ENCODE measurements at regions of chr17 and their contacts with region 1.

Region 1: DNA sequence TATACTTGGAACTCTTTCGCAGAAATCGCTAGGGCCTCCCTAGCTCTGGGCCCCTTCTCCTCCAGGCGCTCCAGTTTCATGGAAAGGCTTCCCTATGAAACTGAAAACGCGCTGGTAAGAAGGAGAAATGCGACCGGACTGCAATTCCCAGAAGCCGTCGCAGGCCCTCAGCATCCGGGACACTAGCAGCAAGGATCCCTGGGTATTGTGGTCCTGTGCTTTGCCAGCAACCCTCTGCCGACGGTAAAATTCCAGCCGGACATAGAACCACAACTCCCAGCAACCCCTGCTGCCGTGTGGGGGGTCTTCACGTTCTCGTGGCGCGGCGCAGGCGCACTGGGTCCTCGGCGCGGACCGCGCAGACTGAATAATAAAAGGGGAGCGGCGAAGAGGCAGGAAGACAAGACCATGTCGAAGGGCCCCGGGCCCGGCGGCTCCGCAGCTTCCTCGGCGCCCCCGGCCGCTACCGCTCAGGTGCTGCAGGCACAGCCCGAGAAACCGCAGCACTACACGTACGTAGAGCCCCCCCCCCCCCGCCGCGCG is at the start of gene UNK:
- DNase-seq: peak; percentile 98 to 99
- ATAC-seq: peak; percentile 82 to 85
- H3K4me3 ChIP-seq: peak within 1 kb of the TSS; percentile 74 to 87 (median 86)
- H3K27ac ChIP-seq: peak within 1 kb of the TSS; percentile 98 to 100 (median 100)
- H3K4me1 ChIP-seq: peaks cover 41 to 47% of the 10 kb centered on the region in 2 donors
- H3K27me3 ChIP-seq: no peaks in the 10 kb centered on the region
- CTCF ChIP-seq: peak in 2 of 5 experiments; percentile 15 to 43
- POLR2A ChIP-seq: peak; percentile 56 to 67
- total RNA-seq, gene UNK: 10.4 to 19.2 (median 13.1) TPM

Region 2: GRCh38 chr17:75808905-75809715 is 24.6 kb after region 1 on chr17:
- in situ Hi-C with region 1: no loop called
- intact Hi-C with region 1: loop called (anchors 1 kb)
- DNase-seq: peak; percentile 68 to 73
- ATAC-seq: peak; percentile 82 to 83
- H3K4me3 ChIP-seq: no peak overlapping the region
- H3K27ac ChIP-seq: peak overlapping the region; percentile 79 to 91 (median 82)
- H3K4me1 ChIP-seq: peaks cover 22 to 24% of the 10 kb centered on the region in 2 donors
- H3K27me3 ChIP-seq: no peaks in the 10 kb centered on the region
- CTCF ChIP-seq: no peak
- POLR2A ChIP-seq: no peak

Region 3: DNA sequence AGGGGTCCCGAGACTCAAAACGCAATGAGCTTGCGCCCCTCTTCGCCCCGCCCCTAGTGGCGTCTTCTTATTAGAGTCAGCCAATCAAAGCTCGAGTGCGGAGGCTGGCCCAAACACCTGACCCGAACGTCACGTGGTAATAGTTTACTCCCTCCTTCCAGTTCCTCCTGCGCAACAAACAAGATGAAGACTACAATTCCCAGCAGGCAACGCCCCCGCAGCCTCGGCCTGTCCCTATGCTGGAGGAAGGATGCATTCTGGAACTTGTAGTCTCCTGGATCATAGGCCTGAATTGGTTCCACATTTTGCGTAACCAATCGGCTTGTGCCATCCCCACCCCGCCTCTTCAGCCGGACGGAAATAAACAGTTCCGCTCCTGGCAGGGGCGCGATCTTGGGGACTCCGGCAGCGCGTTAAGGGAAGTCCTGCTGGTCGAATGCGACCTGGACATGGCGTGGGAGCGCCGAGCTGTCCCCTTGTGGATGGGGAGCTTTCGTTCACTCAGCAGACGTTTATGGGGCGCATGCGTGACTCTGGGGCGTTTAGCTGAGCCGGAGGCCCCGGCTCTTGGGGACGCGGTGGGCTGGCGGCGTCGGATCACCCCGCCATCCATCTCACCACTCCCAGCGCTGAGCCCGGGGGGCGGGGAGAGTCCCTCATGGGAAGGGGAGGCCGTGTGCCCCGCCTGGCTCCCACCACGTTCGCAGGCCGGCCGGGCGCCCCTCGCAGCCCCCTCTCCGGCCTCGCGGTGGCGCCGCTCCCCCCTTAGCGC is 71.0 kb after region 1 on chr17 and contains the start of gene WBP2:
- in situ Hi-C with region 1: loop called in 1 of 4 experiments (anchors 5 kb)
- intact Hi-C with region 1: loop called (anchors 1 kb)
- DNase-seq: peak; percentile 100
- ATAC-seq: peak; percentile 79 to 80
- H3K4me3 ChIP-seq: peak within 1 kb of the TSS; percentile 63 to 85 (median 78)
- H3K27ac ChIP-seq: peak within 1 kb of the TSS; percentile 95 to 99 (median 96)
- H3K4me1 ChIP-seq: peaks cover 39 to 40% of the 10 kb centered on the region in 2 donors
- H3K27me3 ChIP-seq: no peaks in the 10 kb centered on the region
- CTCF ChIP-seq: peak; percentile 54 to 79 (median 61)
- POLR2A ChIP-seq: peak; percentile 96 to 100
- total RNA-seq, gene WBP2: 129 to 259 (median 148) TPM

Region 4: DNA sequence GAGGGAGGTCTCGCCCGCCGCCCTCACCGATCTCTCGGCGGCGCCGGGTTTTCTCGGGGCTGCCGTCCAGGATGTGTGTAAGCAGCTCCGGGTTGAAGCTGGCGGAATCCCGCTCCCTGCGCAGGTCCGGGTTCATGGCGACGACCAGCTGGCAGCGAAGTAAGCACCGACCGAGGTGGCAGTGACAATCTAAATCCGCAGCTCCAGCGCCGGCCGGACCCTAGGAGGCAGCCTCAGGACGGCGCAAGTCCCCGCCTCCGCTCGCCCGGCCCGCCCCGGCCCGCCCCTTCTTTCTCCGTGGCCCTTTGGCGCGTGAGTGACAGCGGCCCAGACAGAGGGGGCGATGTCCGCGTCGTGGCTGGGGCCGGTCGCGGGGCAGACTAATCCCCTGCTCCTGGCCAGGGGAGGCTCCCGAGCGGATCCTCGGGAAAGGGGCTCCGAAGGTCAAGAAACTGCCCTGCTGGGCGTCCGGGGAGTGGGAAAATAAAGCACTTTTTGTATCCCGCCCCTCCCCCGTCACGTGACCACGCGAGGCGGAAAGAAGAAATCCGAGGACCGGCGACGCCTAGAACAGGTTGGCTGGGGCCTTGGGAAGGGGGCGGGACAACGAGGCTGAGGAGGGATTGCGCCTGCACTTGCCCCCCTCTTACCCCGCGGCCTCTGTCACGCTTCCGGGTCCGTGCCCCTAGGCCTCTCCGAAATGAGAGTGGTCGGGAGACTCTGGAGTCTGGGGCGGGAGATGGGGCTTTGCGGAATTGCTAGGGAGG is 194.6 kb after region 1 on chr17 and contains the starts of genes ACOX1 and TEN1:
- in situ Hi-C with region 1: no loop called
- intact Hi-C with region 1: loop called (anchors 10 kb)
- DNase-seq: peak; percentile 97 to 98
- ATAC-seq: peak; percentile 94
- H3K4me3 ChIP-seq: peak within 1 kb of the TSS; percentile 81 to 99 (median 92)
- H3K27ac ChIP-seq: peak within 1 kb of the TSS; percentile 96 to 99 (median 98)
- H3K4me1 ChIP-seq: peaks cover 44 to 45% of the 10 kb centered on the region in 2 donors
- H3K27me3 ChIP-seq: no peaks in the 10 kb centered on the region
- CTCF ChIP-seq: peak; percentile 32 to 60 (median 45)
- POLR2A ChIP-seq: peak; percentile 82 to 91
- total RNA-seq, gene ACOX1: 64.8 to 96.6 (median 80.7) TPM
- total RNA-seq, gene TEN1: 4.2 to 9.2 (median 6.8) TPM

Region 5: DNA sequence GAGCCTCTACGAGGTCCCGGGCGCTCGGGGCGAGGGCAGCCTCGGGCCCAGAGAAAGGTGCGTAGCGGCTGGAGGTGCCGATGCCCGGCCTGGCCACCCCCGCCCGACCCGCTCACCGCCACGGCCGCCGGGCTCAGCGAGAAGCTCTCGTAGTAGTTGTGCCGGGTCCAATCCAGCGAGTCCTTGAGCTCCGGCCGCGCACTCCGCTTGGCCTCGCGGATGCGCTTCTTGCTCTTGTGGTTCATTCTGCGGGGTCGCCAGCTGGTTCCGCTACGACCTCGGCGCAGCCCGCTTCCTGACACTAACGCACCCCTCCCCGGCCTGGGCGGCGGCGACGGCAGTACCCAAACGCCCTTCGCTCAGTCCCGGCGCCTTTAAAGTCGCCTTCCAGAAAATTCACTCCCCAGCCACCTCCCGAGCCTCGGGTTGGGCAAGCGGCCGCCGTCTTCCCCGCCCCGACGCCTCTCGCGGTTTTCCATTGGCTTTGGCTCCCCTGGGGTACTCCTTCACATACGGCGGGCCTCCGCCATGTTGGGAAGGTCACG is 941.8 kb after region 1 on chr17 and contains the start of gene JMJD6:
- in situ Hi-C with region 1: no loop called
- intact Hi-C with region 1: loop called (anchors 10 kb)
- DNase-seq: peak; percentile 98
- ATAC-seq: peak; percentile 86 to 88
- H3K4me3 ChIP-seq: peak within 1 kb of the TSS; percentile 83 to 99 (median 97)
- H3K27ac ChIP-seq: peak within 1 kb of the TSS; percentile 98 to 100 (median 100)
- H3K4me1 ChIP-seq: peaks cover 31 to 36% of the 10 kb centered on the region in 2 donors
- H3K27me3 ChIP-seq: no peaks in the 10 kb centered on the region
- CTCF ChIP-seq: no peak
- POLR2A ChIP-seq: peak; percentile 86 to 97
- total RNA-seq, gene JMJD6: 29.7 to 42.9 (median 41.7) TPM

Measured in gastrocnemius medialis (tissue), 4 donors.